ENCODE measurements at regions of chr15 and their contacts with region 1.

Region 1: GRCh38 chr15:66700802-66701421 is 1.1 kb upstream of the SMAD6 start:
- DNase-seq: peak; percentile 85 to 92 (median 86)
- H3K4me3 ChIP-seq: peak overlapping the region; percentile 51 to 85 (median 68)
- H3K27ac ChIP-seq: peak overlapping the region in 1 of 2 experiments; percentile 61
- H3K4me1 ChIP-seq: peaks cover 4 to 43% (median 35%) of the 10 kb centered on the region in 4 experiments
- H3K27me3 ChIP-seq: peaks cover 0 to 34% (median 5%) of the 10 kb centered on the region in 5 experiments

Region 2: DNA sequence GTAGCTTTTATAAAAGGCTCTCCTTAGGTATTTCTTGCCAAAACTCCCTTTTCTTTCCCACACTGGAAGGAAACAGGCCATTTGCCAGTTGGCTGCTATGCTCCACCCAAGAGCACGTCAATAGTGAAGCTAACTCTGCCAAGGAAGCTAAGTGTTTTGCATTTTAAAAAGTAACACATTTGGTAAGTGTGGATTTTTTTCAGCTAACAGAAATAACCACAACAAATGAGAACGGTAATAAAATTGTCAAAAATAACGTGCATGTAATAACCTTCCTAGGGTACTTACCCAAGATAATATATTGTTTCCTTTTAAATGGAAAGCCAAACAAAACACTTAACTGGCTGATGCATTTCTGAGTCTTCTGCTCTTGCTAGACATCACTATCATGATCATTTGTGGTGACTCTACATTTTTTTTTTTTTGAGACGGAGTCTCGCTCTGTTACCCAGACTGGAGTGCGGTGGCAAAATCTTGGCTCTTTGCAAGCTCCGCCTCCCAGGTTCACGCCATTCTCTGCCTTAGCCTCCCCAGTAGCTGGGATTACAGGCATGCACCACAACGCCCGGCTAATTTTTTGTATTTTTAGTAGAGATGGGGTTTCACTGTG is 1188.0 kb before region 1 on chr15:
- CTCF ChIA-PET with region 1: no interaction called
- POLR2A ChIA-PET with region 1: no interaction called
- DNase-seq: peak; percentile 13 to 61 (median 27)
- H3K4me3 ChIP-seq: no peak overlapping the region
- H3K27ac ChIP-seq: peak overlapping the region; percentile 27 to 49
- H3K4me1 ChIP-seq: peaks cover 9 to 17% (median 13%) of the 10 kb centered on the region in 4 experiments
- H3K27me3 ChIP-seq: no peaks in the 10 kb centered on the region

Region 3: GRCh38 chr15:66452971-66453580 is 247.8 kb before region 1 on chr15:
- CTCF ChIA-PET with region 1: no interaction called
- POLR2A ChIA-PET with region 1: no interaction called
- DNase-seq: peak in 2 of 3 donors; percentile 3 to 5
- H3K4me3 ChIP-seq: no peak overlapping the region
- H3K27ac ChIP-seq: no peak overlapping the region
- H3K4me1 ChIP-seq: peaks cover 0 to 2% (median 0%) of the 10 kb centered on the region in 4 experiments
- H3K27me3 ChIP-seq: no peaks in the 10 kb centered on the region

Region 4: DNA sequence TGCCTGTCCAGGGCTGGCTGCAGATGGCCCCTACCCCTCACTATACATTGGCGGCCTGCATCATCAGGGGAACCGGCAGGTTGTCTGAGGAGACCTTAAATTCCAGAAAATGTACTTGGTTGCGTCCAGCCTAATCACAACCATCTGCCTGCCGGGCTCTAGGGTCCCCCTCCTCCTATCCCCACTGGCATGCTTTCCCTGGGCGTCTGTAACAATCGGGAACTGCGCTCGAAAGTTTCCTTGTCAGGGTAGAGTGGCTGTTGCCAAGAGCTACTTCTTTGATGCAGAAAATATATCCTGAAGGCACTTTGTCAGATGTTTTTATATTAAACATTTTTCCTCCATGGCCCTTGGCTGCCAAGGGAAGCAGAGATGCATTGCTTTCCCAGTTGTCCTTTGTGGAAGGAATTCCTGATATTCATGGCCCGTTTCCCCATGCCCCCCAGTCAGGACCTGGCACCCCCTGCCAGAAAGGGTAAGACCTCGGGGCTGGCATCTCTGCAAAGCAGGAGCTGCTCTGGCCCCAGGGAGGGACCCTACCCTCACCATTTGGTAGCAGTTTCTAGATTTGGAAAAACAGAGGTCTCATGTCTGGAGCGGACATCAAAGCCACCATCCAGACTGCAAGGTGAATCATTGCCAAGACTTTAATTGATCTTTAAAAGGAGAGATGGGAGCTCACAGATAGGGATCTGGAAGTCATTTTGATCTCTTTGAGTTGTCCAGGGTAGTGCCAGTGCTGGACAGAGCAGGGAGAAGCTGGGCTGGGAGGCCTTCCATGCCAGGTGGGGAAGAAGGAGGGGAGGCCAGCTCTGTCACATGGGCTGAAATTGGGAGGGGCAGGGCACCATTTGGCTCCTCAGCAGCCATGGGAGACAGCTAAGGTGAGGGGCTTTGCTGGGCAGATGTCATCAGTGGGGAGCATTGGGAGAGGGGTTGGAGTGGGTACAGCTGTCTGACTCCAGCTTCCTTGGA is 24.2 kb after region 1 on chr15:
- CTCF ChIA-PET with region 1: interaction called, 13 read pairs
- POLR2A ChIA-PET with region 1: interaction called, 4 read pairs
- DNase-seq: no peak
- H3K4me3 ChIP-seq: no peak overlapping the region
- H3K27ac ChIP-seq: no peak overlapping the region
- H3K4me1 ChIP-seq: peaks cover 0 to 20% (median under 1%) of the 10 kb centered on the region in 4 experiments
- H3K27me3 ChIP-seq: no peaks in the 10 kb centered on the region

Region 5: DNA sequence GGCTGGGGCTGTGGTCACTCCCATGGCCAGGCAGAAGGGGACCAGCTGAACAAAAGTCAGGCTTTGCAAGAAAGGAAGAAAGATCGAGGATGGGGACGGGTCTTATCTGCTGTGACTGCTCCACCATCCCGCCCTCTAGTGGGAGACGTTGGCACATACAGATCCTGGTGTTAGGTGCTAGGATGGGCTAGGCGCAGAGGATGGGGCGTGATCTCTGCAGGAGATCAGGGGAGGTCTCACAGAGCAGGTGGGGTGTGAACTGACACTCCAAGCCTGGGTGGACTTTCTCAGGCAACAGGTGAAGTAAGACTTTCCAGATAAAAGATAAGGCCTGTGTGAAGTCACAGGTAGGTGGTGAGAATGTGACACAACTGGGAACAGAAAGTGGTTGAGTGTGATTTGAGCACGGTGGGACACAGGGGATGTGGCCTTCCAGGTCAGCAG is 222.5 kb after region 1 on chr15:
- CTCF ChIA-PET with region 1: no interaction called
- POLR2A ChIA-PET with region 1: no interaction called
- DNase-seq: peak in 2 of 3 donors; percentile 49 to 55
- H3K4me3 ChIP-seq: no peak overlapping the region
- H3K27ac ChIP-seq: no peak overlapping the region
- H3K4me1 ChIP-seq: peaks cover 0 to 25% (median 11%) of the 10 kb centered on the region in 4 experiments
- H3K27me3 ChIP-seq: no peaks in the 10 kb centered on the region

Measured in common myeloid progenitor, CD34-positive (primary cell).